Activated CD4-positive, alpha-beta T cell treated with anti-CD3 and anti-CD28 coated beads, Interleukin-2, amount 10 ng/mL, durations not matched to agents 24 days and 14 days (primary cell): ENCODE measurements at regions of chr7 and their contacts with region 1.

Region 1: DNA sequence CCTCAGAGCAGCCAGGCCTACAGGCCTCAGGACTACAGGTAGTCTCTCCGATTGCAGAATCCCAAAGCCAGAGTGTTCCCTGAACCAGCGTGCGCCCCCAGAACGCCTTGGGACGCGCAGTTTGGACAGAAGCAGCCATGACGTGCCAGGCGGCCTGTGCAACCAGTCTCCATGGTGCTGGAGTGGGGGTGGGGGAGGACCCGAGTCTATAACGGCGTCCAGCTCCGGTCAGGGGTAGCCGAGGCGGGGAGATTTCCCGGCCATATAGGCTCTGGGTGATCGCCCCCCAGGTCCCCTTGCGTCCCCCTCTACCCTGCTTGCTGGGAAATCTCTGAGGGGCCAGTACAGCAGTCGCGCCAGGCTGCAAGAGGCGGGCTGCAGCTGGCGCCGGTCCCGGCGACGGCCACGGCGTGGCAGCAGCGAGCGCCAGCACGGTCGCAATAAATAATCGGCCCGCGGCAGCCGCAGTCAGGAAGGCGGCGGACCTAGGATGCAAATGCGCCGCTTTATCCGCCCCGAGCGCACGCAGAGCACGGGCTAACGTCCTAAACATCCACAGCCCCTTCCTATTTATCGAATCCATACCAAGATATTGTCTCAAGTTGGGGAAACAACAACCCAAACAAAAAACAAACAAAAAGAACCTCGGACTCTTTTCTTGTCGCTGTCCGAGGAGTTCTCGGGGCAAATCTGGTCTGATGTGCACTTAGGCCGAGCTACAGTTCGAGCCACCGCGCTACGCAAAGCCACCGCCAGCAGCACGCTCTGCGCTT is 1.6 kb downstream of the HOXA3 start:
- DNase-seq: peak; percentile 88
- H3K4me3 Mint-ChIP-seq: peak overlapping the region; percentile 69
- H3K27ac Mint-ChIP-seq: no peak overlapping the region
- H3K4me1 Mint-ChIP-seq: peaks cover 15% of the 10 kb centered on the region
- H3K27me3 Mint-ChIP-seq: peaks cover 85% of the 10 kb centered on the region

Region 2: DNA sequence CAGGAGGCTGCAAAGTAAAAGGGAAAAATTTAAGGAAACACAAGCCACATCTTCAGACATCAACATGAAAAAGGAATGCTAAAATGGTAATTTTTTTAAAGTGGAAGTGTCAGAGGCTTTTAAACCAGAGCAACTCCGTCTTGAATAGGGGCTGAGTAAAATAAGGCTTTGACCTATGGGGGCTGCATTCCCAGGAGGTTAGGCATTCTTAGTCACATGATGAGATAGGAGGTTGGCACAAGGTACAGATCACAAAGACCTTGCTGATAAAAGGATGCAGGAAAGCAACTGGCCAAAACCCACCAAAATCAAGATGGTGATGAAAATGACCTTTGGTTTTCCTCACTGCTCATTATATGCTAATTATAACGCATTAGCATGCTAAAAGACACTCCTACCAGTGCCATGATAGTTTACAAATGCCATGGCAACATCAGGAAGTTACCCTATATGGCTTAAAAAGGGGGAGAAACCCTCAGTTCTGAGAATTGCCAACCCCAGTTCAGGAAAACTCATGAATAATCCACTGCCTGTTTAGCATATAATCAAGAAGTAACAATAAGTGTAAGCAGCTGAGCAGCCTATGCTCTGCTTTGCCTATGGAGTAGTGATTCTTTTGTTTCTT is 414.7 kb before region 1 on chr7:
- intact Hi-C with region 1: no loop called
- DNase-seq: no peak
- H3K4me3 Mint-ChIP-seq: no peak overlapping the region
- H3K27ac Mint-ChIP-seq: no peak overlapping the region
- H3K4me1 Mint-ChIP-seq: no peaks in the 10 kb centered on the region
- H3K27me3 Mint-ChIP-seq: peaks cover 11% of the 10 kb centered on the region

Region 3: DNA sequence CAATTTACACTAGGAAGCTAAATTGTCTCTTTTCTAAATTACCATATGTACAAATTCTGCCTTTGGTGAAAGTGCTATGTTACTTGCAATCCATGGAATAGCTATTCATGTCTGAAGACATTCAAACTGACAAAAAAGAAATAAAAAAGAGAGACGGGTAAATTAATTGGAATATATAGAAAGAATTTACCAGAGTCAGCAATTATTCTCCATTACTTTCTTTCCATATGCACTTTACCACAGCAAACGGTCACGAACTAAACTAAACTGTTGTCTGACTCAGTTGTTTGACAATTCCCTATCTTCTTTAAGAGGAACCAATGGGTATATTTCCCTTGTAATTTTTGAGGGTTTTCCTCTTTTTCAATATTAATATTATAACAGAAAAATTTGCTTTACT is 140.7 kb before region 1 on chr7:
- intact Hi-C with region 1: no loop called
- DNase-seq: no peak
- H3K4me3 Mint-ChIP-seq: no peak overlapping the region
- H3K27ac Mint-ChIP-seq: no peak overlapping the region
- H3K4me1 Mint-ChIP-seq: no peaks in the 10 kb centered on the region
- H3K27me3 Mint-ChIP-seq: peaks cover 5% of the 10 kb centered on the region

Region 4: GRCh38 chr7:27130540-27131389 is 20.0 kb before region 1 on chr7 and contains the start of gene HOXA4:
- intact Hi-C with region 1: loop called (anchors 2 kb)
- DNase-seq: peak; percentile 91
- H3K4me3 Mint-ChIP-seq: peak within 1 kb of the TSS; percentile 66
- H3K27ac Mint-ChIP-seq: no peak within 1 kb of the TSS
- H3K4me1 Mint-ChIP-seq: peaks cover 14% of the 10 kb centered on the region
- H3K27me3 Mint-ChIP-seq: peaks cover 53% of the 10 kb centered on the region
- total RNA-seq, gene HOXA4: not detected in 2 replicates